ENCODE measurements at regions of chr16 and their contacts with region 1.

Region 1: DNA sequence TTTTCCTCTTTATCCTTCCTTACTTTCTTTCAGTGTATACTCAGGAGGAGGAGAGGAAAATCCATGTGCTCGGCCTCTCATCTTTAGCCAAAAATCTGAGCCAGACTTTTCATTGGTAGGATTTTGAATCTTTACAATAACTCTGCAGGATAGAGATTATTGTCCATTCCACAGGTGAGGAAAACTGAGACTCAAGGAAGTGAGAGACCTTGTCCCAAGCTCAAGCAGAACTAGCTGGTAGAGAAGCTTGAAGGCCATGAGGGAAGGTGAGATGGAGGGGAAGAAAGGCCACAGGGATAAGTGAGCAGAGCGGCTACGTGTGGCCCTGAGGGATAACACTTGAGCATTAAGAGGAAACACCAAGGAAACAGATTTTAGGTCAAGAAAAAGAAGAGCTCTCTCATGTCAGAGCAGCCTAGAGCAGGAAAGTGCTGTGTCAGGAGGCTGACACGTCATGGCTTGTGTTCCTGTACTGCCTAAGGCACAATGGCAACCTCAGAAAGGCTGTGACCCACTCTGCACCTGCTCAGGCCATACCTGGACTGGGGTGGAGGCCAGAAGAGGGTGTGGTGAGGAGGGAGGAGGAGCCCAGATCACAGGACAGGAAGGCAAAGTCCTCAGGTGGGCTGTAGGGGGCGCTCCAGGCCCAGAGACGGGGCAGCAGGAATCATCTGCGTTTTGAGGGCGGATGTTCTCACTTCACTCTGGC is 11.9 kb downstream of the MT4 start:
- H3K4me3 ChIP-seq: no peak overlapping the region
- H3K27ac ChIP-seq: no peak overlapping the region
- H3K4me1 ChIP-seq: no peaks in the 10 kb centered on the region
- CTCF ChIP-seq: peak; percentile 37; the same call in 1 of the 2 replicates

Region 2: GRCh38 chr16:56589141-56590039 is 12.7 kb after region 1 on chr16 and contains the start of gene MT3:
- CTCF ChIA-PET with region 1: interaction called, 11 read pairs
- POLR2A ChIA-PET with region 1: no interaction called
- H3K4me3 ChIP-seq: peak within 1 kb of the TSS; percentile 25
- H3K27ac ChIP-seq: no peak within 1 kb of the TSS
- H3K4me1 ChIP-seq: no peaks in the 10 kb centered on the region
- CTCF ChIP-seq: no peak

Region 3: GRCh38 chr16:56600398-56600999 is 23.8 kb after region 1 on chr16:
- CTCF ChIA-PET with region 1: interaction called, 40 read pairs
- POLR2A ChIA-PET with region 1: no interaction called
- H3K4me3 ChIP-seq: no peak overlapping the region
- H3K27ac ChIP-seq: no peak overlapping the region
- H3K4me1 ChIP-seq: no peaks in the 10 kb centered on the region
- CTCF ChIP-seq: peak; percentile 42; the same call in 1 of the 2 replicates